Caco-2 (cell line): ENCODE measurements at regions of chr15 and their contacts with region 1.

Region 1: GRCh38 chr15:30670056-30670455 is 44.1 kb downstream of the ARHGAP11B start:
- DNase-seq: no peak
- H3K4me3 ChIP-seq: no peak overlapping the region
- H3K4me3 Mint-ChIP-seq: no peak overlapping the region
- H3K27ac Mint-ChIP-seq: no peak overlapping the region
- H3K4me1 ChIP-seq: no peaks in the 10 kb centered on the region
- H3K4me1 Mint-ChIP-seq: no peaks in the 10 kb centered on the region
- H3K27me3 ChIP-seq: no peaks in the 10 kb centered on the region
- H3K27me3 Mint-ChIP-seq: no peaks in the 10 kb centered on the region
- CTCF ChIP-seq: no peak

Region 2: DNA sequence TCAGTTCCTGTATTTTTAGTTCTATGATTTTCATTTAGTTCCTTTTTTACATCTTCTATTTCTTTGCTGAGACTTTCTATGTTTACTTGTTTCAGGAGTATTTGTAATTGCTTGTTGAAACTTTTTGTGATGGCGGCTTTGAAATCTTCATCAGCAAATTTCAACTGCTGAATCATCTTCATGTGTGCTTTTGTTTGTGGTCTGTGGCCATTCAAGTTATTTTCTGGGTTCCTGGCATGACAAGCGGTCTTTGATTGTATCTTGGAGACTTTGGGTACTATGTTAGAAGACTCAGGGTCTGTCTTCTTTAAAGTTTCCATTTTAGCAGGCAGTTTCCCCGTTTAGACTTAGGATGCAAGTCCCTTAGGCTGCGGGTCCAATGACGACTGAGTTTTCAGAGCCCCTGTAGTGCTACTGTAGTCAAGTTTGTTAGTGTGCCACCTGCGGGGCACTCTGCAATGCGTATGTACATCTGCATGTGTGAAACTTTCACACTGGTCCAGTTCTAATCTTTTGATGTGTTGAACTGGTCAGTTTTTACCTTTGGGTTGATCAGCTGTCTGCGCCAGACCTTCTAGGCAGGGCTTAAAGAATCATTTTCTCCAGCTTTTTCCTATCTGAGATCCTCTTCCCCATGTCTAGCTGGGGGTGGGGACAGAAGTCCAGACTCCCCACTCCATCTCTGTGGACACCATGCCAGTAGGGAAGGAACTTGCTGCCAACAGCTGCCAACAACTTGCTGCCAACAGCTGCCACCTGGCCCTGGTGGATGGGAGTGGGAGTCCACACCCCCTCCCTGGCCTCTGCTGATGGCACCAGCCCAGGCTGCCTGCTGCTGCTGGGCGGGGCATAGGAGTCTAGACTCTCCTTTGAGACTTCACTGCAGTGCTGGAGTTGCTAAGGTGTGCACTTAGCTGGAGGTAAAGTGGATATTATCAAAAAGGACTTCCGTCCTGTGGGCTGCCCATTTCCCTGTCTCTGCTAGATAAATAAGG is 1038.7 kb before region 1 on chr15:
- CTCF ChIA-PET with region 1: no interaction called
- POLR2A ChIA-PET with region 1: no interaction called
- intact Hi-C with region 1: no loop called
- DNase-seq: no peak
- H3K4me3 ChIP-seq: no peak overlapping the region
- H3K4me3 Mint-ChIP-seq: no peak overlapping the region
- H3K27ac Mint-ChIP-seq: no peak overlapping the region
- H3K4me1 ChIP-seq: no peaks in the 10 kb centered on the region
- H3K4me1 Mint-ChIP-seq: no peaks in the 10 kb centered on the region
- H3K27me3 ChIP-seq: no peaks in the 10 kb centered on the region
- H3K27me3 Mint-ChIP-seq: peaks cover 20% of the 10 kb centered on the region
- CTCF ChIP-seq: no peak

Region 3: GRCh38 chr15:30650012-30650929 is 19.8 kb before region 1 on chr15:
- CTCF ChIA-PET with region 1: no interaction called
- POLR2A ChIA-PET with region 1: no interaction called
- intact Hi-C with region 1: no loop called
- DNase-seq: no peak
- H3K4me3 ChIP-seq: no peak overlapping the region
- H3K4me3 Mint-ChIP-seq: no peak overlapping the region
- H3K27ac Mint-ChIP-seq: peak overlapping the region; percentile 11
- H3K4me1 ChIP-seq: no peaks in the 10 kb centered on the region
- H3K4me1 Mint-ChIP-seq: no peaks in the 10 kb centered on the region
- H3K27me3 ChIP-seq: no peaks in the 10 kb centered on the region
- H3K27me3 Mint-ChIP-seq: no peaks in the 10 kb centered on the region
- CTCF ChIP-seq: no peak

Region 4: DNA sequence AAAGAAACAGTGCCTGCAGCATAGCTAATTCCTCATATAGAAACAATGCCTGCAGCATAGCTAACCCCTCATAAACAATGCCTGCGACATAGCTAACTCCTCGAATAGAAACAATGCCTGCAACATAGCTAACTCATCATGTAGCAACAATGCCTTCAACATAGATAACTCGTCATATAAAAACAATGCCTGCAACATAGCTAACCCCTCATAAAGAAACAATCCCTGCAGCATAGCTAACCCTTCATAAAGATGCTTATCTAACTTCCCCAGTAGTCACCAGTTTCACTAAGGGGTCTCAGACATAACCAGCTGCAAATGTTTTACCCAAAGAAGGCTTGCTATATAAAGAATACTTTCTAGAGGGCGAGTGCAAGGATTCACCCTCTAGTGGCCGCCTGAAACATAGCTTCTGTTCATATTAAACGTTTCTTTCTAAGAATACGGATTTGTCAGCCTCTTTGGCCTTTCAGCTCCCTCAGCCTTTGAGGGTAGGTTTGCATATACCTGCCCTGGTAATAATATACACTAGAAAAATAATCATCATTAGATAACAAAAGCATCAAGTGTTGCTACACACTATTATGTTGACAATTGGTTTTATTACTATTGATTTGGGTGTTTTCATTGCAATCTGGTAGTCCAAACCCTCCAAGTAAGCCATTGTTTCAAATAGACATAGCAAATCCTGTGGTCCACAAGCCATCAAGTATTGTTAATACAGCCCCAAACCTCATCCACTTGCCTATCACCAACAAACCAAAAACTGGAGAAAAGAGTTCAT is 189.2 kb after region 1 on chr15:
- CTCF ChIA-PET with region 1: no interaction called
- POLR2A ChIA-PET with region 1: no interaction called
- intact Hi-C with region 1: loop called (anchors 10 kb)
- DNase-seq: peak in 1 of 2 experiments; percentile 32
- H3K4me3 ChIP-seq: no peak overlapping the region
- H3K4me3 Mint-ChIP-seq: no peak overlapping the region
- H3K27ac Mint-ChIP-seq: no peak overlapping the region
- H3K4me1 ChIP-seq: no peaks in the 10 kb centered on the region
- H3K4me1 Mint-ChIP-seq: no peaks in the 10 kb centered on the region
- H3K27me3 ChIP-seq: no peaks in the 10 kb centered on the region
- H3K27me3 Mint-ChIP-seq: no peaks in the 10 kb centered on the region
- CTCF ChIP-seq: peak; percentile 75 to 77